ENCODE measurements at regions of chr14 and their contacts with region 1.

Region 1: GRCh38 chr14:23006544-23007419 is 3.2 kb downstream of the C14orf93 start:
- DNase-seq: peak; percentile 89 to 99 (median 97)
- ATAC-seq: peak; percentile 94 to 97 (median 96)
- H3K4me3 ChIP-seq: peak overlapping the region; percentile 73 to 85
- H3K4me3 Mint-ChIP-seq: peak overlapping the region; percentile 96 to 98 (median 97)
- H3K27ac ChIP-seq: peak overlapping the region; percentile 85
- H3K27ac Mint-ChIP-seq: peak overlapping the region; percentile 98 to 99
- H3K4me1 ChIP-seq: peaks cover 25 to 32% of the 10 kb centered on the region in 2 experiments
- H3K4me1 Mint-ChIP-seq: peaks cover 36 to 47% (median 45%) of the 10 kb centered on the region in 3 donors
- H3K27me3 ChIP-seq: no peaks in the 10 kb centered on the region
- H3K27me3 Mint-ChIP-seq: no peaks in the 10 kb centered on the region

Region 2: GRCh38 chr14:21455911-21456667 is 1550.7 kb before region 1 on chr14 and contains the start of gene CHD8:
- CTCF ChIA-PET with region 1: no interaction called
- POLR2A ChIA-PET with region 1: interaction called in 1 of 2 experiments, 11 read pairs
- DNase-seq: peak; percentile 94 to 100 (median 99)
- ATAC-seq: peak; percentile 95 to 98 (median 97)
- H3K4me3 ChIP-seq: peak within 1 kb of the TSS; percentile 87 to 92
- H3K4me3 Mint-ChIP-seq: peak within 1 kb of the TSS; percentile 93 to 95 (median 93)
- H3K27ac ChIP-seq: peak within 1 kb of the TSS; percentile 85
- H3K27ac Mint-ChIP-seq: peak within 1 kb of the TSS; percentile 98 to 99
- H3K4me1 ChIP-seq: peaks cover 10 to 36% of the 10 kb centered on the region in 2 experiments
- H3K4me1 Mint-ChIP-seq: peaks cover 33 to 51% (median 39%) of the 10 kb centered on the region in 3 donors
- H3K27me3 ChIP-seq: no peaks in the 10 kb centered on the region
- H3K27me3 Mint-ChIP-seq: no peaks in the 10 kb centered on the region
- total RNA-seq, gene CHD8: 125 to 133 (median 131) TPM

Region 3: DNA sequence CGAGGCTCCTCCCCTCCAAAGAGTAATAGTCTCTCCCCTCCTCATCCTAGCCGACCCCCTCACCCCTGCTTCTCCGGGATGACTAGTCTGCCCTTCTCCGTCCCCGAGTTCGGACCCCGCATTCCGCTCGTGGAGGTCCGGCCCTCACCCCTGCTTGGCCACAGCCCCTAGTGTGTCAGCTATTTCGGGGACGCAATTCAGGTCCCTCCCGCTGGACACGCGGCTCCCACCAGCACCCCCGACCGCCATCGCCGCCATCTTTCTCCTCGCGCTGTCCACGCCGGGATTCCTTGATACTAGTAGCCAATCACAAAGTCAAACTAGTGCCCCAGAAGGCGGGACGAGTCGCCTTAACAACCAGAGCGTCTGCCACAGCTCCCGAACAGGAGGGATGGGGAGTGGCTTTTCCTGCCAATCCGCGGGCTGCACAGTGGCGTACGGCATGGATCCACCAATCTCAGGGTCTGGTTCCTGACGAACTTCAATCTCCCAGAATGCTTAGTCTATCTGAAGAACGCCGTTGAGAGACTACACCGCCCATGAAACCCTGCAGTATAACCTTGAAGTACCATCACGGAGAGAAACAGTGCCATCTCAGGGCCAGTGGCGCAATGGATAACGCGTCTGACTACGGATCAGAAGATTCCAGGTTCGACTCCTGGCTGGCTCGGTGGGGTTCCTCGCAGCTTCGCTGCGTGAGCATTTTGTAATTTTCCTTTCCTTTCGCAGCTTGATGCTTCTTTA is 77.5 kb before region 1 on chr14 and contains the start of gene PRMT5:
- CTCF ChIA-PET with region 1: interaction called, 3 to 15 read pairs
- POLR2A ChIA-PET with region 1: no interaction called
- DNase-seq: peak; percentile 93 to 100 (median 98)
- ATAC-seq: peak; percentile 95 to 97 (median 97)
- H3K4me3 ChIP-seq: peak within 1 kb of the TSS; percentile 97 to 99
- H3K4me3 Mint-ChIP-seq: no peak within 1 kb of the TSS
- H3K27ac ChIP-seq: peak within 1 kb of the TSS; percentile 89
- H3K27ac Mint-ChIP-seq: no peak within 1 kb of the TSS
- H3K4me1 ChIP-seq: peaks cover 9 to 20% of the 10 kb centered on the region in 2 experiments
- H3K4me1 Mint-ChIP-seq: peaks cover 5 to 19% (median 11%) of the 10 kb centered on the region in 3 donors
- H3K27me3 ChIP-seq: no peaks in the 10 kb centered on the region
- H3K27me3 Mint-ChIP-seq: no peaks in the 10 kb centered on the region
- total RNA-seq, gene PRMT5: 17.7 to 45.3 (median 37.5) TPM

Region 4: GRCh38 chr14:22994762-22995275 is 12.0 kb before region 1 on chr14:
- CTCF ChIA-PET with region 1: interaction called, 11 to 25 read pairs
- POLR2A ChIA-PET with region 1: interaction called in 1 of 2 experiments, 4 read pairs
- DNase-seq: peak in 10 of 35 experiments; percentile 24 to 62 (median 32)
- ATAC-seq: peak; percentile 69 to 85 (median 75)
- H3K4me3 ChIP-seq: no peak overlapping the region
- H3K4me3 Mint-ChIP-seq: no peak overlapping the region
- H3K27ac ChIP-seq: no peak overlapping the region
- H3K27ac Mint-ChIP-seq: no peak overlapping the region
- H3K4me1 ChIP-seq: peaks cover 0 to 4% of the 10 kb centered on the region in 2 experiments
- H3K4me1 Mint-ChIP-seq: no peaks in the 10 kb centered on the region
- H3K27me3 ChIP-seq: no peaks in the 10 kb centered on the region
- H3K27me3 Mint-ChIP-seq: no peaks in the 10 kb centered on the region

Region 5: DNA sequence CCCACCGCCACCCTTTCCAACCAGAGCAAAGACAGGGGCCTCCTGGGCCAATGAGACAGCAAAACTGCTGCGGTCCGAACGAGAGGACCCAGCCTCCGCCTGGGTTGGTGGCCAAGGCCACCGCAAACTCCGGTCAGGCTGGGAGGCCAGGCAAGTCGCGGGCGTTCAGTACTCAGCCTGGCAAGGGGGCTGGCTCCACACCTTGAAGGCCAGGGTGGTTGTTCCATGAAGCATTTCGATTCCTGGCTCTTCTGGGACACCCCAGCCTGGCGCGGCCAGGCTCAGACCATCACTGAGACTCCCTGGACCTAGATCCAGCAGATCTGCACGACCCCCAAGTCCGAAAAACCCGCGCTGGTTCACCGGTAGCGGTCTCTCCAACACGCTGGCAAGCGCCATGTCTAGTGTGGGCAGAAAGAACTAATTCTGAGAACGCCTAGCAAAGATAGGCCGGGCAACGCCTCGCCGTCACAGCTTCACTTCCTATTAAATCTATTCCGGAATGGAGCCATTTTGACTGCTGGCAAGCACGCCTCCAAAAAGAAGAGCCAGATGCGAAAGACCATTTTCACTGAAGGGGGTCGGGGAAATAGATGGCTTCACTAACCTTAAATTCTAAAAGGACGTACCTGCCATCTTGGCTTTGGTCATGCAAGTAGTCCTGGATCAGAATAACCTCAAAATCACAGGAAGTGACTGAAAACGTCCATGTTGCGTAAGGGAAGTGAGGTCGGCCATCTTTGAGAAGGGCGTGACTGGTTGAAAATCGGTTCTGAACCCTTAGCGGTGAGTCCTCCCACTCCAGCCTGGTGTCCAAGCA is 27.9 kb after region 1 on chr14 and contains the start of gene PSMB5:
- CTCF ChIA-PET with region 1: interaction called, 4 to 10 read pairs
- POLR2A ChIA-PET with region 1: interaction called in 1 of 2 experiments, 9 read pairs
- DNase-seq: peak; percentile 71 to 95 (median 88)
- ATAC-seq: peak; percentile 90 to 95 (median 93)
- H3K4me3 ChIP-seq: peak within 1 kb of the TSS; percentile 79 to 85
- H3K4me3 Mint-ChIP-seq: peak within 1 kb of the TSS; percentile 88 to 98 (median 91)
- H3K27ac ChIP-seq: peak within 1 kb of the TSS; percentile 89
- H3K27ac Mint-ChIP-seq: peak within 1 kb of the TSS; percentile 98 to 99
- H3K4me1 ChIP-seq: peaks cover 9 to 20% of the 10 kb centered on the region in 2 experiments
- H3K4me1 Mint-ChIP-seq: peaks cover 26 to 33% (median 33%) of the 10 kb centered on the region in 3 donors
- H3K27me3 ChIP-seq: no peaks in the 10 kb centered on the region
- H3K27me3 Mint-ChIP-seq: no peaks in the 10 kb centered on the region
- total RNA-seq, gene PSMB5: 20.6 to 43.9 (median 38.0) TPM

Region 6: GRCh38 chr14:23057757-23058653 is 51.2 kb after region 1 on chr14:
- CTCF ChIA-PET with region 1: interaction called, 3 to 12 read pairs
- POLR2A ChIA-PET with region 1: interaction called in 1 of 2 experiments, 7 read pairs
- DNase-seq: peak; percentile 61 to 93 (median 80)
- ATAC-seq: peak; percentile 71 to 77 (median 72)
- H3K4me3 ChIP-seq: peak overlapping the region; percentile 77 to 86
- H3K4me3 Mint-ChIP-seq: peak overlapping the region; percentile 82 to 84 (median 84)
- H3K27ac ChIP-seq: no peak overlapping the region
- H3K27ac Mint-ChIP-seq: peak overlapping the region; percentile 70 to 81
- H3K4me1 ChIP-seq: peaks cover 6 to 20% of the 10 kb centered on the region in 2 experiments
- H3K4me1 Mint-ChIP-seq: peaks cover 14 to 21% (median 17%) of the 10 kb centered on the region in 3 donors
- H3K27me3 ChIP-seq: peaks cover 0 to 6% of the 10 kb centered on the region in 2 experiments
- H3K27me3 Mint-ChIP-seq: no peaks in the 10 kb centered on the region

Region 7: DNA sequence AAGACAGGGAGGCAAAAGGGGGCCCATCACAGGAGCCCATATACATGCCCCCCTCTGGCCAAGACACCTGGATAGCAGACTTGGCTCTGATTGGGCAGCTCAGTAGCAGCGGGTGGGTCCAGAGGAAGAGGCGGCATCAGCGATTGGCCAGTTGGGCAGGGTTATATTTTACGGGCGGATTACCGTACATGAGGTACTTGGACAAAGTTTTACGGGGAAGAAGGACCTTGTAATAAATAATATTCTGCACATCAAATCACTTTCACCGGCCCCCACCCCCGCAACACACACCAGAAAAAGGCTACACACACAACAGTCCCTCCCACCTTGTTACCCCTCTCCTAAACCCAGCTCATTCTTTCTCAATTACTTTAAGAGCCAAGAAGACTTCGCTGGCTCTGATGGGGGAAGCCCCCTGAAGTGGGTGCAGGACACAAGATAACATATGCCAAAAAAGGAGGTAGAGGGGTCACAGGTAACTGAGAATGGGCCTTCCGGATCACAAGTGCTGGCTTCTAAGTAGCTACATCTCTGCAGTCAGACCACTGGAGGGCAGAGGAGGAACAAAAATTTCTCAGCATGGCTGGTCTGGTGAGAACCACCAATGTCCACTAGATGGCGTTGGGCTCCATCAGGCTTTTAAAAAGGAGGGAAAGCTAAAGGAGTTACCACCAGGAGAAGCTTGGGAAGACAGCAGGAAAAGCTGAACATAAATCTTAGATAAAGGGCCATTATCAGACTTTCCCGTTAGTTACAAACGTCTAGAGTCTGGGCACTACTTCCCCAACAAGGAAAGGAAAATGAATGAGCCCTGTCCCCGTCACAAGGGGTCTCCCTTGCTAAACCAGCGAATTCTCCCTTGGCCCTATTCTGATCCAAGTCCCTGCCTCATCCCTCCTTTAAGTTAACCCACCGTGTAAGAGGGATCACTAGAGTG is 62.0 kb after region 1 on chr14:
- CTCF ChIA-PET with region 1: interaction called in 1 of 2 experiments, 11 read pairs
- POLR2A ChIA-PET with region 1: interaction called, 3 to 8 read pairs
- DNase-seq: peak; percentile 40 to 90 (median 66)
- ATAC-seq: peak; percentile 76 to 86 (median 79)
- H3K4me3 ChIP-seq: no peak overlapping the region
- H3K4me3 Mint-ChIP-seq: peak overlapping the region; percentile 17 to 34 (median 31)
- H3K27ac ChIP-seq: peak overlapping the region; percentile 38
- H3K27ac Mint-ChIP-seq: peak overlapping the region; percentile 61
- H3K4me1 ChIP-seq: peaks cover 12 to 37% of the 10 kb centered on the region in 2 experiments
- H3K4me1 Mint-ChIP-seq: peaks cover 35 to 45% (median 41%) of the 10 kb centered on the region in 3 donors
- H3K27me3 ChIP-seq: no peaks in the 10 kb centered on the region
- H3K27me3 Mint-ChIP-seq: no peaks in the 10 kb centered on the region